Spleen (tissue), 13 donors: ENCODE measurements at regions of chr21 and their contacts with region 1.

Region 1: DNA sequence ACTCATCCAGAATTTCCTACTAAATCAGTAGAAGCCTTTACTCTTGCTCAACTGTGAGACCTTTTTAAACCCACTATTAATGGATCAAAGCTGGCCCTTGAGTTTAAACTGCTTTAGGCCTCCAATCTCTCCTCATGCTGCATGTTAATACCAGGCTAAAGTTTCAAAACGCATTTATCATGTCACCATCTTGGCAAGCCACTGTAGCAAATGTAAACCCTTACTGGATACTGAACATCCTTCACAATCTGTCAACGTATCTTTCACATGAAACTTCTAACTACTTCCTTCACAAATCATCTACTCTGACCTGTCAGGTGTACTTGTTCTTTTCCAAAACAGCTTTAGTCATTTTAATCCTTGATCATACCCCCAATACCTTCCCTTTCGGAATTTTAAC is 3.0 kb downstream of the PAXBP1 start:
- DNase-seq: no peak
- H3K4me3 ChIP-seq: no peak overlapping the region
- H3K27ac ChIP-seq: no peak overlapping the region
- H3K4me1 ChIP-seq: peaks cover 17 to 90% (median 58%) of the 10 kb centered on the region in 6 donors
- H3K27me3 ChIP-seq: peaks cover 0 to 4% (median 0%) of the 10 kb centered on the region in 7 donors
- CTCF ChIP-seq: no peak
- POLR2A ChIP-seq: no peak

Region 2: DNA sequence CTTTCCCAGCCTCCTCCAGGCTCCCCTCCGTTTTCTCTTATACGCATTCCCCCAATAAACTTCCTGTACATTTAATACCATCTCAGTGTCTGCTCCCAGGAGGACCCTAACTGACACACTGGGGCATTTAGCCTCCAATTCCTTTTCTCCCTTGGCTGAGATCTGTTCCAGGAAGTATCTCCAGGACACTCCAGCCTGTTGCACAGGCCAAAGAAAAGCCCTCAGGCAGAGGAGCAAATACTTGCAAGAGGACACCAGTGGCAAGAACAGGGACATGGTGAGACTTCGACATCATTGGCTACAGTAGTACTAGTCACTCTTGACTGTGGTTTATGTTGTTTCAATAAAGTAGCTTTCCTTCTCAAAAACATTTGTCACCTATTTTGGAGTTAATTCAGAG is 36.0 kb before region 1 on chr21:
- intact Hi-C with region 1: loop called (anchors 5 kb)
- DNase-seq: no peak
- H3K4me3 ChIP-seq: no peak overlapping the region
- H3K27ac ChIP-seq: no peak overlapping the region
- H3K4me1 ChIP-seq: peaks cover 0 to 25% (median 8%) of the 10 kb centered on the region in 6 donors
- H3K27me3 ChIP-seq: no peaks in the 10 kb centered on the region
- CTCF ChIP-seq: no peak
- POLR2A ChIP-seq: no peak